ENCODE measurements at regions of chr2 and their contacts with region 1.

Region 1: GRCh38 chr2:201231781-201232466 is 28.4 kb upstream of the CASP8 start:
- H3K4me3 ChIP-seq: no peak overlapping the region
- H3K27ac ChIP-seq: no peak overlapping the region
- H3K4me1 ChIP-seq: no peaks in the 10 kb centered on the region
- CTCF ChIP-seq: peak; percentile 95

Region 2: DNA sequence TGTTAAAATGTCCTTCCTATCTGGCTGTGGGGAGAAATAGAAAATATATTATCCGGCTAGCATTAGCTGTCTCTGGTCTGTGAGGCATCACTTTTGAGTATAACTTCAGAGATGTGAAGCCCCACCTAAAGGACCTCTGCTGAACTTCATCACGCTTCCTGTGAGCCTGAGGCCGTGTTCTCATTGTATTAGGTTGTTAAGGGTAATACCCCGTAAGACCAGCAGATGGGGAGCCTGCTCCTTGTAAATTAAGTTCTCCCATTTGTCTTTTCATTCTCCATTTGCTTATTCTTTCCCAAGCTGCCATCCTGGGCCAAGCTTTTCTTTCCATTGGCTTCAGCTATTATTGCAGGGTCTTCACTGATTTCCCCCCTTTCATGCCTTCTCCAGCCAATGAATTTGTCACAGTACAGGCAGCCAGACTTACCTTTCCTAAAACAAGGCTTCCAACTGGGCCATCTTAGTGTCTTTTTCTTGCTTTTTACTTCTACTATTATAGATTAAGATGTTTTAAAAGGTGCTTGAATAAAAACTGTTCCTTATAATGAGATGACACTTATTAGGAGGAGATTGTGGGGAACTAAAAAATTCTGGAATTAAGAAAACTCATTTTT is 330.4 kb before region 1 on chr2:
- CTCF ChIA-PET with region 1: interaction called, 16 read pairs
- POLR2A ChIA-PET with region 1: interaction called, 3 read pairs
- H3K4me3 ChIP-seq: no peak overlapping the region
- H3K27ac ChIP-seq: no peak overlapping the region
- H3K4me1 ChIP-seq: no peaks in the 10 kb centered on the region
- CTCF ChIP-seq: peak; percentile 78

Region 3: DNA sequence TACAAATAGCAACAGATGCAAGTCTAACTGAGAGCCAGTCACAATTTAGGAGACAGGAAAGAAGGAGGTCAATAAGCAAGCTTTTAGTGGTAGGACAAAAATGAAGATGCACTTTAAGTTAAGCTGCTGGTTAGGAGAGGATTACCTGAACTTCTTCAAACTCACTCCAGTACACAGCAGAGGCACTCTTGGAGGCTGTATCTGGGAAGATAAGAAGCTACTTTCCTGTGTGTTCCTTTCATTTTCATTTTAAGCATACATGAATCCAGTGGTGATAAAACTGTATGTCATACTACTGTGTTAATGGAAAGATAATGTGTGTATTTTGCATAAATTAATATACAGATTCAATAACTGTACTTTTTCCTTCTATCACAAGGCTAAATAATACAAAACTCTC is 210.0 kb before region 1 on chr2:
- CTCF ChIA-PET with region 1: no interaction called
- POLR2A ChIA-PET with region 1: no interaction called
- H3K4me3 ChIP-seq: no peak overlapping the region
- H3K27ac ChIP-seq: no peak overlapping the region
- H3K4me1 ChIP-seq: no peaks in the 10 kb centered on the region
- CTCF ChIP-seq: no peak

Region 4: DNA sequence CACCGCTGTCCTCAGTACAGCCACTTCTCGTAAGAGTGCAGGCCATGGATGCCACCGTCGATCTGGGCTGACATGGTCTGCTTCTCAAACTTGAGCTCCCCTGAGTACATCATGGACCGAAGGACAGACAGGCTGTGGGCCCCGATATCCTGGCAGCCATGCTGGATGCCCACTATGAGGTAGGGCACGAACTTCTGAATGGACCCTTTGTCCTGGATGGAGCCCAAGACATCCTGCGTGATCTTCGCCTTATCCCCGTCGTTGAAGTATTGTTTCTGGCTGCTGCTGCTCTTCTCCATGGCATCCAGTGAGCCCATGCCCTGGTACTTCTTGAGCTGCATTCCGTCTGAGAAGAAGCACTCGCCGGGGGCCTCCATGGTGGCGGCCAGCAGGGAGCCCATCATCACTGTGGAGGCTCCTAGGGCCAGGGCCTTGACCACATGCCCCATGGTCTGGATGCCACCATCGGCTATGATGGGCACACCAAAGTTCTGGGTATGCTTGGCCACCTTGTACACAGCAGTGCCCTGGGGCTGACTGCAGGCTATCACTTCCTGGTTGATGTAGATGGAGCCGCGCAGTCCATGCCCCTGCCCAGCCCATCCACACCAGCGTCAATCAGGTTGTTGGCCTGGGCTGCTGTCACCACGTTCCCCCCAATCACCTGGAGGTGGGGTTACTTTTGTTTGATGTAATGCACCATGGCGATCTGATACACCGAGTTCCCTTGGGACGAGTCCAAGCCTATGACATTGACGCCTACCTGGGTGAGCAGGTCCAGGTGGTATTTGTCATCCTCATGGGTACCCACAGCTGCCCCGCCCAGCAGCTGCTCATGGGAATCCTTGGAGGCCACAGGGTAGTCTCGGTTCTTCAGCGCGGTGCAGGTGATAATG is 94.2 kb before region 1 on chr2:
- CTCF ChIA-PET with region 1: no interaction called
- POLR2A ChIA-PET with region 1: no interaction called
- H3K4me3 ChIP-seq: no peak overlapping the region
- H3K27ac ChIP-seq: no peak overlapping the region
- H3K4me1 ChIP-seq: no peaks in the 10 kb centered on the region
- CTCF ChIP-seq: no peak

Region 5: DNA sequence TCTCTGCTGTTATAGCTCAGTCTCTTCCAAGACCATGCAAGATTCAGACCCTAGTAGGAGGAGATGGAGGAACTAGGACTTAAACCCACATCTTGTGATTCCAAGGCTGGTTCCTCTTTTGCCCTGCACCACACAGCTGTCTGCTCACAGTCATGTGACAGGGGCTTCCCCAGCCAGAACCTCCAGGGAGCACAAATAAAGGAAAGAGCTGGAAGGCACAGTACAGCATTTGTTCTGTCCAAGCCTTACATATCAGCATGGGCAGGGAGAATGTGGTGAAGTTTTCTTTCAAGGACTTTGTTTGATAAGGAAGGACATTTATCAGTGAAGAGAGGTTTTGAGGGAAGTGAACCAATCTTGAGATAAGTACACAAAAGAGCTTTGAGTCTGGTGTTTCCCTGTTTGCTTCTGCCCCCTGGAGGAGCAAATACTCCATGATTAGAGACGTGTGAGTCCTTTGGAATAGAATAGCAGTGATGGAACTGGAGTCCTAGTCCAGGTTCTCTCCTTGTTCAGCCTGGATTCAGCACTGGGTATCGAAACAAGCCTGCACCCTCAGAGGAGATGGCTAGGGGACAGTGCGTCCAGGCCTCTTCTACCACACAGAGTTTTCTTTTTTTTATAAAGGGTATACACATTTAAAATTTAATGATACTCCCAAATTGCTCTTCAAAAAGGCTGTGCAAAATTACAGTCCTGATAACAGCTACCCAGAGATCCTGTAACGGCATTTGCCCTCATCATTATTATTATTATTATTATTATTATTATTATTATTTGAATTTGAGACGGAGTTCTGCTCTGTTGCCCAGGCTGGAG is 73.6 kb before region 1 on chr2:
- CTCF ChIA-PET with region 1: interaction called, 12 read pairs
- POLR2A ChIA-PET with region 1: no interaction called
- H3K4me3 ChIP-seq: no peak overlapping the region
- H3K27ac ChIP-seq: no peak overlapping the region
- H3K4me1 ChIP-seq: 0 out of 2 replicates have a peak, but pooled peaks cover 2% of the 10 kb centered on the region
- CTCF ChIP-seq: peak; percentile 62

Region 6: DNA sequence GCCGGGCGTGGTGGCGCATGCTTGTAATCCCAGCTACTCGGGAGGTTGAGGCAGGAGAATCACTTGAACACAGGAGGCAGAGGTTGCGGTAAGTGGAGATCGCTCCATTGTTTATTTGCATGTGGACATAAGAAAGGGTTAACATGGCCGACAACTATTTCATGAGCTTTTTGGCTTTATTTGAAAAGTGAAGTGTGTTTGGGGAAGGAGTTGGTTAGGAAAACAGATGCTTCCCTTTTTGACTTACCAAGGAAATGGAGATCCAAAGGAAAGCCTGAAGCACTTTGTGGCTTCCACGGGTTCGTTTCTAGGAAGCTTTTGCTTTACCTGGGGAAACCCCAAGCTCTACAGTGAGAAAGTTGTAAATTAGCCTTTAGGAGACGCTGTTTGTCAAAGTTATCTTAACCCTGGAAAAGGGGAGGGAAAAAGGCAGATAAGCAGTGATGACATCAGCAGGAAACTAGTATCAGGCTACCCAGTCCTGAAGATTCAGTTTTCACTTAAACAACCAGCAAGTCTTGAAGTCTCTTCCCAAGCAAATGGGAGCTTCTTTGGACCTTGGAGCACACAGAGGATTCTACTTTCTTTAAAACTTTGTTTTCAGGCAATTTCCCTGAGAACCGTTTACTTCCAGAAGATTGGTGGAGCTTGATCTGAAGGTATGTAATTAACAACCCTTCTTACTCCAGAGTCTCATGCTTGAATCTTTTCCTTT is 49.1 kb before region 1 on chr2 and contains the start of gene CASP10:
- CTCF ChIA-PET with region 1: interaction called, 53 read pairs
- POLR2A ChIA-PET with region 1: interaction called, 13 read pairs
- H3K4me3 ChIP-seq: peak within 1 kb of the TSS; percentile 42
- H3K27ac ChIP-seq: no peak within 1 kb of the TSS
- H3K4me1 ChIP-seq: no peaks in the 10 kb centered on the region
- CTCF ChIP-seq: peak; percentile 81

Region 7: DNA sequence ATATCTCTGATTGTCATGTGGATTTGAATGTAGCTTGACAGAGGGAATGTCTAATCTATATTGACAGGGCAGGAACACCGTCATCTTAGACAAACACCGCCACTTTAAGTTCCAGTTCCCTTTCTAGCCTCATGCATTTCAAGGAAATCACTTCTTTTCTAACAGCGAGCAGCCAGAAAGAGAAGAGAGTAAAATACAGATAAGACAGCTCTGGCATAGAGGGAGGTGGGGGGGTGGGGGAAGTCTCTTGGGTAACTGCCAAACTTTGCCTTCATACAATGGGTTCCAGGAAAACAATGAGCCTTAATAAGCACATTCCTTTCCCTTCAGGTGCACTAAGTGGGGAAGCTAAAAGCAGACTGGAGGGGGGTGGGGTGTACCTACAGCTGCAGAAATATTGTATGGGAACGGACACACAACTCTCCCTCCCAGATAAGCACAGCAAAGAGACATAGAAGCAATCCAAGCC is 11.8 kb before region 1 on chr2:
- CTCF ChIA-PET with region 1: interaction called, 37 read pairs
- POLR2A ChIA-PET with region 1: no interaction called
- H3K4me3 ChIP-seq: no peak overlapping the region
- H3K27ac ChIP-seq: no peak overlapping the region
- H3K4me1 ChIP-seq: peaks cover 6% of the 10 kb centered on the region
- CTCF ChIP-seq: no peak

Measured in HEK293 (cell line).